ENCODE measurements at regions of chr1 and their contacts with region 1.

Region 1: DNA sequence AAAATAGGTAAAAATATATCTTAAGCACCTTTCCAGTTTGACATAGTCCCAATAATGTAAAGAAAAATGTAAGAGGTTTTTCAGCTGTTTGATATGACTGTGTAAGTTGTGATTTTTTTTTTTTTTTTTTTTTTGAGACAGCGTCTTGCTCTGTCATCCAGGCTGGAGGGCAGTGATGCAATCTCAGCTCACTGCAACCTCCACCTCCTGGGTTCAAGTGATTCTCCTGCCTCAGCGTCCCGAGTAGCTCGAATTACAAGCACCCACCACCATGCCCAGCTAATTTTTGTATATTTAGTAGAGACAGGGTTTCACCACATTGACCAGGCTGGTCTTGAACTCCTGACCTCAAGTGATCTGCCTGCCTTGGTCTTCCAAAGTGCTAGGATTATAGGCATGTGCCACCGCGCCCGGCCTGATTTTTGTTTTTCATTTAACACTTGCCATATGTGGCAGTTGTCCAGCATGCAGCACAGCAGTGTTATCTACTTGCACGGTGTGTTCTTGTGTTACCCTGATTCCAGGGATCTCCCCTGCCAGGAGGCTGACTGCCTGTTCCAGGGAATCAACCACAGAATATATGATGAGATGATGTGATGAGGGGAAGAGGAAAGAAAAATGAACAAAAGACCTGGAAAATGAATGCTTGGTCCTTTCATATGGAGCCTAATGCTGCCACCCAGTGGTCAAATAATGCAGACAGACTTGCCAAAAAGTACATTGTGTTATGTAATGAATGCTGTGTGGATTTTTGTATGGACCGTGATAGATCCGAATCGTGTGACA is 79.0 kb downstream of the RAVER2 start:
- DNase-seq: peak in 4 of 5 donors; percentile 61 to 92 (median 80)
- H3K4me3 ChIP-seq: peak overlapping the region in 2 of 3 donors; percentile 3 to 16
- H3K27ac ChIP-seq: no peak overlapping the region
- H3K4me1 ChIP-seq: no peaks in the 10 kb centered on the region
- H3K27me3 ChIP-seq: no peaks in the 10 kb centered on the region
- CTCF ChIP-seq: peak; percentile 89

Region 2: DNA sequence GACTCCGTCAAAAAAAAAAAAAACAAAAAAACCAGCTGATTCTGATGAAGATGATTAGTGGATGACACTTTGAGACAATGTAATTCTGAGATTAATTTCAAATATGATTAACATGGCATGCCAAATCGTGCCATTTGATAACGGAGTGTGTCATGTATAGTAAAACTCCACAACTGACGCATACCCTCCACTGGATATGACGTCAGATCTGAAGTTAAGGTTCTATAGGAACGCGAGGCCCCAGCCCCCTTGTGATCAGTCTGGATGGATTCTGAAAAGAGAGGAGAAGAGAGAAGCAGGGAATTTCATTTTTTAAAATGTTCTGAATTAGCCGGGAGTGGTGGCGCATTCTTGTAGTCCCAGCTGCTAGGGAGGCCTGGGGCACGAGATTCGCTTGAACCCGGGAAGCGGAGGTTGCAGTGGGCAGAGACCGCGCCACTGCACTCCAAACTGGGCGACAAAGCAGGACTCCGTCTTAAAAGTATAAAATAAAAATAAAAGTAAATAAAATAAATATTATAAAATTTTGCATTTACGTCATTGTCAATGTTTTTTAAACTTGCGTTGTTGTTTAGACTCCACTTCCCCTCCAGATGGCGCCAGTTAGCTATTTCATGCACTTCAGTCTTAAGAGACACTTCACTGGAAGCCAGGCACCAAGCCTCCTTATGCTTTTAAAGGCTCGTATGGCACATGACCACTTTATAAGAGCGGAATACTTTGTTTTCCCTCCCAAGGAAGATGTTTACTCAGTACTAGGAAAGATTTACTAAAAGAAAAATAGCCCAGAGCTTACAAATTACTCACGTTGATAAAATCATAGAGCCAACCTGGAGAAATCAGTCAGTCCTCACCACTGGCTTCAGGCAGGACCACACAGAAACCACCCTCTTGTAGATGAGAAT is 555.0 kb before region 1 on chr1:
- intact Hi-C with region 1: loop called (anchors 10 kb)
- DNase-seq: peak in 4 of 5 donors; percentile 64 to 95 (median 84)
- H3K4me3 ChIP-seq: no peak overlapping the region
- H3K27ac ChIP-seq: no peak overlapping the region
- H3K4me1 ChIP-seq: peaks cover 0 to 3% (median 0%) of the 10 kb centered on the region in 3 donors
- H3K27me3 ChIP-seq: no peaks in the 10 kb centered on the region
- CTCF ChIP-seq: peak; percentile 75

Region 3: DNA sequence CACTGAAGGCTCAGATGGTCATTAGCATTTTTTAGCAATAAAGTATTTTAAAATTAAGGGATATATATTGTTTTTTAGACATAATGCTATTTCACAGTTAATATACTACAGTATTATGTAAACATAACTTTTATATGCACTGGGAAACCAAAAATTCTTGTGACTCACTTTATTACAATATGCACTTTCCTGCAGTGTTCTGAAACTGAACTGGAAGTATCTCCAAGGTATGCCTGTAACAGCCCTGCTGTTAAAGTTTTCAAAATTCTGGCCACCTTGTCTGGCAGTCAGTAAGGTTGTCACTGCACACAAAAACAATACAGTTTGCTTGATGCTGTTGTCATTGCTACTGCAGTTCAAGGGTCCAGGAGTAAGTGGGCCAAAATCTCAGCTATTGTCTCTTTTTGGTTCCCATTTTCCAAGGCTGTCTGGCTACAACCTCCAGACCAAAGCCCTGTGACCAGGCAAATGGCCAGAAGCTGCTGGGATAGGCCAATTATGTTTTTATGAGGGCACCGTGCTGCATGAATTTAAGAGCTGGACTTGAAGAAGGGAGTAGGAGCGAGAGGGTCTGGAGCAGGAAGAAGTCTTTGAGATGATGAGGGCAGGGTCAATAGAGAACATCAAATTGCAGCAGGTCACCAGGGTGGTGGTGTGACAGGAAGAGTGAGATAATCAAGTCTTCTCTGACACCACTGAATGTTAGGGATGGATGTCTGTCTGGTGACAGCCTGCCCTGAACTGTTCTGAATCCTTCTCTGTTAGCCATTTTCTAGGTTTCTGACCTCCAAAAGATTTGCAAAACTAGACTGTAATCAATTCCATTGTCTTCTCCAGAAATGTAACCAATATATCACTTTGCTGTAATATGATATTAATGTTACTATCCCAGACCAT is 436.2 kb before region 1 on chr1:
- intact Hi-C with region 1: loop called (anchors 10 kb)
- DNase-seq: peak in 1 of 5 donors; percentile 12
- H3K4me3 ChIP-seq: no peak overlapping the region
- H3K27ac ChIP-seq: no peak overlapping the region
- H3K4me1 ChIP-seq: no peaks in the 10 kb centered on the region
- H3K27me3 ChIP-seq: no peaks in the 10 kb centered on the region
- CTCF ChIP-seq: no peak

Region 4: GRCh38 chr1:64686828-64687724 is 136.8 kb before region 1 on chr1:
- intact Hi-C with region 1: no loop called
- DNase-seq: peak in 2 of 5 donors; percentile 43 to 72
- H3K4me3 ChIP-seq: no peak overlapping the region
- H3K27ac ChIP-seq: no peak overlapping the region
- H3K4me1 ChIP-seq: no peaks in the 10 kb centered on the region
- H3K27me3 ChIP-seq: no peaks in the 10 kb centered on the region
- CTCF ChIP-seq: peak; percentile 84

Region 5: GRCh38 chr1:64882574-64883255 is 58.8 kb after region 1 on chr1:
- intact Hi-C with region 1: no loop called
- DNase-seq: no peak
- H3K4me3 ChIP-seq: no peak overlapping the region
- H3K27ac ChIP-seq: no peak overlapping the region
- H3K4me1 ChIP-seq: peaks cover 0 to under 1% (median 0%) of the 10 kb centered on the region in 3 donors
- H3K27me3 ChIP-seq: no peaks in the 10 kb centered on the region
- CTCF ChIP-seq: no peak